ENCODE measurements at regions of chr5 and their contacts with region 1.

Region 1: DNA sequence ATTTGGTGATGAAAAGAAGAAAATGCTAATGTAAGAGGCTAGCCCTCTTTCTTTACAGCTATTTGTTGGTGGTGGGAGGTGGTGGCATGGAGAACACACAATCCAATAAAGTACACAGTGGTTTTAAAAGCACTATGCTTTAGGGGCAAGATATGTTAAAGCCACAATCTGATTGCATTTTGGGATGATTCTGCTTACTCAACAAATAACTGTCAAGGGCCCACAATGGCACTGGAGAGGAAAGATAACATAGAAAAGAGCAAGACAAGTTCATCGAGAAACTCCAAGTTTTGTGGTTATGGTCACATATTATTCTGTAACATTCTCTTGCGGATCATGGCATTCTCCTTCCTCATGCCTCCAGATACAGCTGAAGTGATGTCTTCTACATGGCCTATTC is 38.8 kb downstream of the OTP start:
- DNase-seq: no peak
- H3K4me3 ChIP-seq: no peak overlapping the region
- H3K27ac ChIP-seq: no peak overlapping the region
- H3K4me1 ChIP-seq: no peaks in the 10 kb centered on the region
- H3K27me3 ChIP-seq: no peaks in the 10 kb centered on the region
- CTCF ChIP-seq: no peak

Region 2: DNA sequence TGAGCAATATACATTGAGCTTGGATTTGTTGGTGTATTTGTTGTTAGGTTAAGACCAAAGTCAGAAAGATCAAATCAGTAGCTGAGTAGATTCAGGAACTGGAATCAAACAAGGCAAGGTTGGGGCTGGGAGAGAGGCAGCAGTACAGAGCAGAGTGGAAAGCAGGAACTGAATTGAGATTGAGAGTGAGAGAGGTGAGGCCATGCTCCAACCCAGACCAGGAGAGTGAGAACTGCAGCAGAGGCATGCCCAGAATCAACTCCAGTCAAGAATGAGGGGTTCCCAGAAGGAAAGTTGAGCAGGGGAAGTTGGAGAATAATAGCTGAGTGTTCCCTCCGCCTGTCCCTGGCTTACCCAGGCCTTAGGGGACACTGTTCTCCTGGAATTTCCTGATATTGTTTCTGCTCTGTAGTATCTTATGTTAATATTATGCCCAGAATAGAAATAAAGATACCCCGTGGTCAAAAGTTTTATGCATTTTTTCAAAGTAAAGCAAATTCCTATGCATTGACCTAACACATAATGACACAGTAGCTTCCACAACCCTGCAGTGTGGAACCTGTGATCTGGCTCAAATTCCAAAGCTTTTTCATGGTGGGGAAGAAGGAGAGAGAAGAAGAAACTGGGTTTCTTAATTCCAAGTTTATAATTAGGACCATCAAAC is 1433.8 kb before region 1 on chr5:
- CTCF ChIA-PET with region 1: no interaction called
- POLR2A ChIA-PET with region 1: no interaction called
- intact Hi-C with region 1: no loop called
- DNase-seq: no peak
- H3K4me3 ChIP-seq: no peak overlapping the region
- H3K27ac ChIP-seq: no peak overlapping the region
- H3K4me1 ChIP-seq: no peaks in the 10 kb centered on the region
- H3K27me3 ChIP-seq: no peaks in the 10 kb centered on the region; the same call in 1 of the 2 replicates
- CTCF ChIP-seq: no peak

Region 3: GRCh38 chr5:77101298-77101697 is 498.4 kb before region 1 on chr5:
- CTCF ChIA-PET with region 1: no interaction called
- POLR2A ChIA-PET with region 1: interaction called, 10 read pairs
- intact Hi-C with region 1: no loop called
- DNase-seq: no peak
- H3K4me3 ChIP-seq: no peak overlapping the region
- H3K27ac ChIP-seq: no peak overlapping the region
- H3K4me1 ChIP-seq: no peaks in the 10 kb centered on the region
- H3K27me3 ChIP-seq: no peaks in the 10 kb centered on the region
- CTCF ChIP-seq: no peak

Measured in PC-9 (cell line).